ENCODE measurements at regions of chr7 and their contacts with region 1.

Region 1: GRCh38 chr7:112550468-112551060 is 69.8 kb downstream of the LSMEM1 start:
- DNase-seq: peak; percentile 15 to 44
- H3K4me3 ChIP-seq: no peak overlapping the region
- H3K27ac ChIP-seq: no peak overlapping the region
- H3K4me1 ChIP-seq: no peaks in the 10 kb centered on the region
- H3K27me3 ChIP-seq: no peaks in the 10 kb centered on the region
- CTCF ChIP-seq: peak; percentile 88

Region 2: DNA sequence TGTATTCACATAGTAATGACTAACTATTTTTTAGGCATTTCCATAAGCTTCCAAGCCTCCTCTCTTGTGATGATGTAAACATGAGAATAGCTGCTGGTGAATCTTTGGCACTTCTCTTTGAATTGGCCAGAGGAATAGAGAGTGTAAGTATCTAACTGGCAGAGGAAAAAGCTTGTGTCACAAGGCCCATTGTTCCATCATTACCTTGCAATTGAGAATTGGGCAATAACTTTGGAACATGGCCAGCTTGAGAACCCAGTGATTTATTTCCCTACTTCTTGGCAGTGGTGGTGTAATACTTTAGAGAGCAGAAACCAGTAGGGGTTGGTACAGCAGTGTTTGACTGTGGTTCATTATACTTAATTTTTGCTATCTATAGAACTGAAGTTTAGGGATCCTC is 88.3 kb before region 1 on chr7:
- CTCF ChIA-PET with region 1: no interaction called
- POLR2A ChIA-PET with region 1: no interaction called
- intact Hi-C with region 1: no loop called
- DNase-seq: peak; percentile 40 to 65
- H3K4me3 ChIP-seq: no peak overlapping the region
- H3K27ac ChIP-seq: peak overlapping the region; percentile 52
- H3K4me1 ChIP-seq: 0 out of 2 replicates have a peak, but pooled peaks cover 8% of the 10 kb centered on the region
- H3K27me3 ChIP-seq: no peaks in the 10 kb centered on the region
- CTCF ChIP-seq: no peak

Region 3: GRCh38 chr7:112630565-112630964 is 80.0 kb after region 1 on chr7:
- CTCF ChIA-PET with region 1: no interaction called
- POLR2A ChIA-PET with region 1: no interaction called
- intact Hi-C with region 1: no loop called
- DNase-seq: no peak
- H3K4me3 ChIP-seq: no peak overlapping the region
- H3K27ac ChIP-seq: no peak overlapping the region
- H3K4me1 ChIP-seq: no peaks in the 10 kb centered on the region
- H3K27me3 ChIP-seq: no peaks in the 10 kb centered on the region
- CTCF ChIP-seq: no peak

Region 4: GRCh38 chr7:112898432-112899290 is 348.1 kb after region 1 on chr7:
- CTCF ChIA-PET with region 1: no interaction called
- POLR2A ChIA-PET with region 1: no interaction called
- intact Hi-C with region 1: loop called (anchors 1 kb)
- DNase-seq: peak; percentile 31 to 45
- H3K4me3 ChIP-seq: no peak overlapping the region
- H3K27ac ChIP-seq: no peak overlapping the region
- H3K4me1 ChIP-seq: no peaks in the 10 kb centered on the region
- H3K27me3 ChIP-seq: no peaks in the 10 kb centered on the region
- CTCF ChIP-seq: peak; percentile 87

Region 5: DNA sequence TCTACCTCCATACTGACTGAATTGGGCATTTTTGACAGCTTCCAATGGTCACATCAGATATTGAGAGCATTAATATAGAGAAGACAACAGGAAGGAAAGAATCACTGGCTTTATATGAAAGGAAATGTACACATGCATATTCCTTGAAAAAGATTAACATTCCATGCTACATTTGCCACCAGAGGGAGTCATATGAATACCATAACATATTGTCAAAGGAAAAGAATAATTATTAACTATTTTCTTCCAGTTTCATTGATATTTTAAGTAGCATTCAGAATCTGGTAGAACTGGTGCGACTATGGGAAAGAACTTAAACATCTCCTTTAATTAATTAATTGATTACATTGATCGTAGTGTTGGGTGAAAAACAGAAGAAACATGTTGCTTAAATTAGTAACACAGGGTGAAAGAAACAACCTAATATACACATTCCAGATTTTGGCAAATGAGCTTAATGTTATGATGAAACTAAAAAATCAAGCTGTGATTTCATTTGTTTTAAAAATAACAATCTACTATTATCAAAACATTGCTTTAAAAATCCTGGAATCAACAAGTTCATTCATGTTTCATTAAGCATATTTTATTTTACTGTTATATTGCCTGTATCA is 464.6 kb after region 1 on chr7:
- CTCF ChIA-PET with region 1: no interaction called
- POLR2A ChIA-PET with region 1: no interaction called
- intact Hi-C with region 1: loop called (anchors 2 kb)
- DNase-seq: no peak
- H3K4me3 ChIP-seq: no peak overlapping the region
- H3K27ac ChIP-seq: no peak overlapping the region
- H3K4me1 ChIP-seq: no peaks in the 10 kb centered on the region
- H3K27me3 ChIP-seq: no peaks in the 10 kb centered on the region
- CTCF ChIP-seq: peak; percentile 70

Region 6: GRCh38 chr7:113698556-113699220 is 1148.1 kb after region 1 on chr7:
- CTCF ChIA-PET with region 1: no interaction called
- POLR2A ChIA-PET with region 1: no interaction called
- intact Hi-C with region 1: loop called (anchors 2 kb)
- DNase-seq: no peak
- H3K4me3 ChIP-seq: no peak overlapping the region
- H3K27ac ChIP-seq: no peak overlapping the region
- H3K4me1 ChIP-seq: no peaks in the 10 kb centered on the region
- H3K27me3 ChIP-seq: no peaks in the 10 kb centered on the region
- CTCF ChIP-seq: peak; percentile 76

Measured in PC-9 (cell line).